ENCODE measurements at regions of chr5 and their contacts with region 1.

Region 1: GRCh38 chr5:67209142-67209771 is 12.7 kb upstream of the CD180 start:
- DNase-seq: peak; percentile 60
- ATAC-seq: peak; percentile 96
- H3K4me3 Mint-ChIP-seq: no peak overlapping the region
- H3K27ac Mint-ChIP-seq: no peak overlapping the region
- H3K4me1 Mint-ChIP-seq: no peaks in the 10 kb centered on the region
- H3K27me3 Mint-ChIP-seq: no peaks in the 10 kb centered on the region; the same call in 1 of the 2 replicates
- CTCF ChIP-seq: peak; percentile 75

Region 2: GRCh38 chr5:67156976-67157583 is 52.2 kb before region 1 on chr5:
- CTCF ChIA-PET with region 1: interaction called, 25 read pairs
- POLR2A ChIA-PET with region 1: no interaction called
- DNase-seq: peak; percentile 26
- ATAC-seq: peak; percentile 70
- H3K4me3 Mint-ChIP-seq: no peak overlapping the region
- H3K27ac Mint-ChIP-seq: no peak overlapping the region
- H3K4me1 Mint-ChIP-seq: peaks cover 22% of the 10 kb centered on the region
- H3K27me3 Mint-ChIP-seq: no peaks in the 10 kb centered on the region
- CTCF ChIP-seq: peak; percentile 57

Region 3: DNA sequence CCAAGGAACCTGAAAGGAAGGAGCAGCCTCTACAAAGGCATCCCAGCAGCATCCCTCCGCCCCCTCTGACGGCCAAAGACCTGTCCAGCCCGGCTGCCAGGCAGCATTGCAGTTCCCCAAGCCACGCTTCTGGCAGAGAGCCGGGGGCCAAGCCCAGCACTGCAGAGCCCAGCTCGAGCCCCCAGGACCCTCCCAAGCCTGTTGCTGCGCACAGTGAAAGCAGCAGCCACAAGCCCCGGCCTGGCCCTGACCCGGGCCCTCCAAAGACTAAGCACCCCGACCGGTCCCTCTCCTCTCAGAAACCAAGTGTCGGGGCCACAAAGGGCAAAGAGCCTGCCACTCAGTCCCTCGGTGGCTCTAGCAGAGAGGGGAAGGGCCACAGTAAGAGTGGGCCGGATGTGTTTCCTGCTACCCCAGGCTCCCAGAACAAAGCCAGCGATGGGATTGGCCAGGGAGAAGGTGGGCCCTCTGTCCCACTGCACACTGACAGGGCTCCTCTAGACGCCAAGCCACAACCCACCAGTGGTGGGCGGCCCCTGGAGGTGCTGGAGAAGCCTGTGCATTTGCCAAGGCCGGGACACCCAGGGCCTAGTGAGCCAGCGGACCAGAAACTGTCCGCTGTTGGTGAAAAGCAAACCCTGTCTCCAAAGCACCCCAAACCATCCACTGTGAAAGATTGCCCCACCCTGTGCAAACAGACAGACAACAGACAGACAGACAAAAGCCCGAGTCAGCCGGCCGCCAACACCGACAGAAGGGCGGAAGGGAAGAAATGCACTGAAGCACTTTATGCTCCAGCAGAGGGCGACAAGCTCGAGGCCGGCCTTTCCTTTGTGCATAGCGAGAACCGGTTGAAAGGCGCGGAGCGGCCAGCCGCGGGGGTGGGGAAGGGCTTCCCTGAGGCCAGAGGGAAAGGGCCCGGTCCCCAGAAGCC is 43.5 kb before region 1 on chr5:
- CTCF ChIA-PET with region 1: interaction called, 49 read pairs
- POLR2A ChIA-PET with region 1: no interaction called
- DNase-seq: peak; percentile 88
- ATAC-seq: peak; percentile 78
- H3K4me3 Mint-ChIP-seq: peak overlapping the region; percentile 60
- H3K27ac Mint-ChIP-seq: peak overlapping the region; percentile 41
- H3K4me1 Mint-ChIP-seq: peaks cover 33% of the 10 kb centered on the region
- H3K27me3 Mint-ChIP-seq: no peaks in the 10 kb centered on the region
- CTCF ChIP-seq: peak; percentile 48

Region 4: GRCh38 chr5:67223211-67223610 is 14.0 kb after region 1 on chr5:
- CTCF ChIA-PET with region 1: no interaction called
- POLR2A ChIA-PET with region 1: no interaction called
- DNase-seq: no peak
- ATAC-seq: no peak
- H3K4me3 Mint-ChIP-seq: no peak overlapping the region
- H3K27ac Mint-ChIP-seq: no peak overlapping the region
- H3K4me1 Mint-ChIP-seq: no peaks in the 10 kb centered on the region
- H3K27me3 Mint-ChIP-seq: no peaks in the 10 kb centered on the region; the same call in 1 of the 2 replicates
- CTCF ChIP-seq: no peak